GM12878 (cell line): ENCODE measurements at regions of chr14 and their contacts with region 1.

Region 1: DNA sequence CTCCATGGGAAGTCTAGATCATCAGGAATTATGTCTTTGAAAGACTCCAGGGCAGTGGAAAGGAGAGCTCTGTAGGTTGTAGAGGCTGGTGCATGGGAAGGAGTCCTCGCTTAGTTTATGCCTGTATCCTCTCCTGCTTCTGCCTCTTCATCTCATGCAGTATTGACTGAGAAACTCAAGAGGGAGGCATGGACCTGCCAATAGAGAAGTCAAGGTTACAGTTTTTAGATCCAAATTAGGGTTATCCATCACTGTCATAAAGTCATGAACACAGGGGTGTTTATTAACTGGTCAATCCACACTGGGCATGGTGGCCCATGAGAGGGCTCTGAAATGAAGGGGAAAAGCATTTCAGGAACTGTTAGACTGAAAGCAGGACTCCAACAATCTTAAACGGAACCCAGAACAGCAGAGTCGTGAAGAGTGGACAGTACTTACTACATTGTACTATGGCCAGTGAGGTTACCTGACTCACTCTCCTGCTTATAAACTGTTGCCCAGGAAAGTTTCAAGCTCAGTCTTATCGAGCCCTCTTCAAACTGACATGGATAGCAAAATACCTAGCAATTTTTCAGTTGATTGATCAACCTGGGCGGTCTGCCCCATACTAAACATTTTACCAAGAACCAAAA is 30.1 kb upstream of the DHRS7 start:
- DNase-seq: no peak
- ATAC-seq: peak; percentile 88
- H3K4me3 ChIP-seq: no peak overlapping the region
- H3K27ac ChIP-seq: no peak overlapping the region
- H3K4me1 ChIP-seq: peaks cover 10% of the 10 kb centered on the region
- H3K27me3 ChIP-seq: no peaks in the 10 kb centered on the region
- CTCF ChIP-seq: peak; percentile 50 to 70 (median 59); a peak in 5 of 6 replicates
- EP300 ChIP-seq: no peak
- POLR2A ChIP-seq: no peak
- RAD21 ChIP-seq: peak; percentile 91

Region 2: DNA sequence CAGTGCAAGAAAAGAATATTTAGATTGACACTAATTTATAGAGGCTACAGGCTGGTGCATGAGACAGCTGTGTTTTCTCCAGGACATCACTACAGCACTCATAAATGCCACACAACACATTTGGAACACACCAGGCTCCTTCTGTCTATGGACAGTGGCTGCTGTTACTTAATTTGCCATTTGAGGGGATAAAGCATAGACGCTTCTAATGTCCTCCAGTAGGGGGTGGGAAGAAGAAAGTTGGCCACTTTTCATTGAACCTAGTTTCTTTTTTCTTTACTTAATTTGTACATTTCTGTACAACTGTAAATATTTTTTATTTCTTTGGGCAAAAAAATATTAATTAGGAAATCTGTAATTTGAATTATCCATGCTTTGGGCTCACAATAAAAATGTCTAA is 312.3 kb before region 1 on chr14:
- CTCF ChIA-PET with region 1: no interaction called
- POLR2A ChIA-PET with region 1: no interaction called
- RAD21 ChIA-PET with region 1: no interaction called
- SMC1A ChIA-PET with region 1: no interaction called
- in situ Hi-C with region 1: no loop called
- intact Hi-C with region 1: no loop called
- DNase-seq: no peak
- ATAC-seq: peak; percentile 65
- H3K4me3 ChIP-seq: no peak overlapping the region
- H3K27ac ChIP-seq: no peak overlapping the region
- H3K4me1 ChIP-seq: no peaks in the 10 kb centered on the region
- H3K27me3 ChIP-seq: no peaks in the 10 kb centered on the region; a peak in 1 of 4 replicates
- CTCF ChIP-seq: peak; percentile 9 to 39 (median 30); a peak in 2 of 6 replicates
- EP300 ChIP-seq: no peak
- POLR2A ChIP-seq: no peak
- RAD21 ChIP-seq: no peak

Region 3: DNA sequence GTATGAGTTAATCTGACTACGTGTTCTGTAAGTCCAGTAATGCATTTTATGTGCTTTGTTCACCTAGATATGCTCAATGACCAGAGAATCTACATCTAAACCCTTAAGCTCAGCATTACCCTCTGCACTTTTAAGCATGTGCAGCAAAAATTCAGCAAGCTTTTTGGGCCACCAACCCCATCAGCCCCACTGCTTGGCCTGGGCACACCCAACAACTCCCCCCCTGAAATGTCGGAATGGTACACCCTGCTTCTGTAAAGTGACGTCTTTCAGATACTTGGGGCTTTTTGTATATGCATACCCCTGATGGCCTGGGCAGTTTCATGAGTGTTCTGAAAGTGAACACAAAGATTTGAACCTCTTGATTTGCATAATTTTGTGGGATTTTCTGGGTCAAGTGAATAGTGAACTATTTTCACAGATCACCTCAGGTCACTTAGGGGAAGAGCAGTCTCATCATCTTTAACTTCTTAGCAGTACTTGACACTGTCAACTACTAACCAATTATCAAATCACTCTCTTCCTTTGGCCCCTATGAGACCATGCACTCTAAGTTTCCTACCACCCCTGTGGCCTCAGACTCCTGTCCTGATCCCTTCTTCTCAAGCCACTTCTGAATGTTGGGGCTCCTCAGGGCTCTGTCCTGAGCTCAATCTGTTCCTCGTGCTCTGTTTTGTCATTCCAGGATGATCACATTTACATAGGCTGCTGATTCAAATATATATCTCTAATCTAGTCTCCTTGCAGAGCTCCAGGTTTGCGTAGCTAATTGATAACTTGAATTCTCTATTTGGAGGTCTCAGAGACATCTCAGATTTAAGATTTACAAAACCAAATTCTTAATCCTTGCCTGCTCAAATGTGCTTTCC is 17.4 kb after region 1 on chr14:
- CTCF ChIA-PET with region 1: interaction called, 9 read pairs
- POLR2A ChIA-PET with region 1: interaction called, 241 read pairs
- RAD21 ChIA-PET with region 1: interaction called, 153 read pairs
- SMC1A ChIA-PET with region 1: interaction called, 202 read pairs
- in situ Hi-C with region 1: no loop called
- intact Hi-C with region 1: no loop called
- DNase-seq: peak; percentile 98
- ATAC-seq: peak; percentile 89
- H3K4me3 ChIP-seq: no peak overlapping the region
- H3K27ac ChIP-seq: peak overlapping the region; percentile 93
- H3K4me1 ChIP-seq: peaks cover 39% of the 10 kb centered on the region
- H3K27me3 ChIP-seq: no peaks in the 10 kb centered on the region
- CTCF ChIP-seq: no peak
- EP300 ChIP-seq: peak; percentile 73 to 86
- POLR2A ChIP-seq: no peak; the same call in 1 of the 2 replicates
- RAD21 ChIP-seq: no peak

Region 4: DNA sequence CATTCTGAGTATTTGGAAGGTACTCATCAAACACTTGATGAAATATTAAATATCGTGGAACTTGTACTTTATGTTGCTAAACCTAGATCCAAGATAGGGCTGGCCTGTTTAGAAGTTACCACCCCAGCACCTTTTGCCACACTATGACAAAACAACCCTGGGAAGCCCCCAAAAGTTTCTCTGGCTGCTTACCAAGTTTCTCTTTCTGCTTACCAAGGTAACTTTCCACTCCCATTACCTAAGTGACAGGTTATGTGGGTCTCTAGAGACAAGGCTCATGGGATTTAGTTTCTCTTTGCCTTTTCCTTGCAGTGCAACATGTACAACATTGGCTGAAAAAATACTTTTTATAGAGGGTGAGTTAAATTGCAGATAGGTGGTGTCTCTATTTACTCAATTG is 24.8 kb after region 1 on chr14:
- CTCF ChIA-PET with region 1: interaction called, 9 read pairs
- POLR2A ChIA-PET with region 1: interaction called, 241 read pairs
- RAD21 ChIA-PET with region 1: interaction called, 5 read pairs
- SMC1A ChIA-PET with region 1: interaction called, 202 read pairs
- in situ Hi-C with region 1: no loop called
- intact Hi-C with region 1: no loop called
- DNase-seq: peak; percentile 82
- ATAC-seq: peak; percentile 72
- H3K4me3 ChIP-seq: no peak overlapping the region
- H3K27ac ChIP-seq: peak overlapping the region; percentile 49
- H3K4me1 ChIP-seq: peaks cover 28% of the 10 kb centered on the region
- H3K27me3 ChIP-seq: no peaks in the 10 kb centered on the region
- CTCF ChIP-seq: no peak
- EP300 ChIP-seq: no peak
- POLR2A ChIP-seq: no peak
- RAD21 ChIP-seq: no peak

Region 5: DNA sequence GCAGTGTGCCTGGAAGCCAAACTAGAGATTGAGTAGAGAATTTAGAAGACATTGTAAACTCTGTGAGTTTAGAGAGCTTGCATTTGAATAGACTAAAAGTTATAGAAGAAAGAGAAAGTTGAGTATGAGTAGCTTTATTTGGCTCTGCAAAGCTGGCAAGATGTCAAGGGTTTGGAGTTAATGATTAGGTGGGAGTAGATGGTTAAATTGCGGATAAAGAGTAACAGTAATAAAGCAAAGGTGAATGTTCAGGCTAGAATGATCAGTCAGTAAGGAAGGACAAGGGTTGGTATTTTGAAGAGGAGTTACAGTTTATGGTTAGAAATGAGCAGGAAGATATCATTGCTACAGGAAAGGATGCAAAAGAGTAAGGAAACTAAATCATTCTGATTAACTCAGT is 58.9 kb after region 1 on chr14:
- CTCF ChIA-PET with region 1: interaction called, 6 read pairs
- POLR2A ChIA-PET with region 1: interaction called, 8 read pairs
- RAD21 ChIA-PET with region 1: interaction called, 13 read pairs
- SMC1A ChIA-PET with region 1: interaction called, 52 read pairs
- in situ Hi-C with region 1: no loop called
- intact Hi-C with region 1: no loop called
- DNase-seq: no peak
- ATAC-seq: no peak
- H3K4me3 ChIP-seq: peak overlapping the region; percentile 24; the same call in 1 of the 2 replicates
- H3K27ac ChIP-seq: no peak overlapping the region
- H3K4me1 ChIP-seq: no peaks in the 10 kb centered on the region
- H3K27me3 ChIP-seq: no peaks in the 10 kb centered on the region
- CTCF ChIP-seq: no peak
- EP300 ChIP-seq: no peak
- POLR2A ChIP-seq: no peak
- RAD21 ChIP-seq: no peak

Region 6: DNA sequence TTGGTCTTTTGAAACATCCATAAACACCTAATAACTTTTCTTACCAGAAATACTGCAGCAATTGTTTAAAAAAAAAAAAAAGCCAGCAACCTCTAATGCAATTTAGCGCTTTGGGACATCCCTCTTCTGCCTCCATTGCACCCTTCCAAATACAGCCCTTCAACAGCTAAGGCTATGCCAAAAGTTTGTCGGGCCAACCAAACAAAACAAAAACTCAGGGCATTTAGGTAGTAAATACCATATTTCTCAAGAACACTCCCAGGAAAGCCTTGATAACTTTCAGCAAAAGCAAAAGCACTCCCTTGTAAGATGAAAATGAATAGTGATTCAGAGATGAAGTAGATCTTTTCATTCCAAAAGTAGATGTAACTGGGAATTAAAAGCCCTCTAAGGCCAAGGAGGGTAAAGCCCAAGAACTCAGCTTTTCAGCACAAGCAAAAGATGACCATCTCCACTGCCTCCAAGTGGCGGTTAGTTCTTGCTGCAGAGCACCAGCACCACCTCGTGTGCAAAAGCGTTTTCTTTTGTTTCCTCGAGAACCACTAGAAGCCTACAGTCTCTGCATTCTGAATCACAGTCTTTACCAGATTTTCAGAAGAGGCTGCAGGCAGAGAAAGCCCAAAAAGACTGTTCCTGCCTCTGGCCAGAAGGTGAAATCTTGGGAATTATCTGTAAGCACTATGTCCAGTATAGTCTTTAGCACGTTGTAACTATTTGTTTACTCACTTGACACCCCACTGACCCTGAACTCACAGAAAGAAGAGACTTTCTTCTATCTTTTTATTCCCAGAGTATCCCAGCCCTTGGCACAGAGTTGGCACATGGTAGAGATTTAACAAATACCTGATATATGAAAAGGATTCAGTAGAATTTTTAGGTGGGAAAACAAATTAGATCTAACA is 366.8 kb after region 1 on chr14:
- CTCF ChIA-PET with region 1: interaction called, 119 read pairs
- POLR2A ChIA-PET with region 1: no interaction called
- RAD21 ChIA-PET with region 1: interaction called, 9 read pairs
- SMC1A ChIA-PET with region 1: interaction called, 66 read pairs
- in situ Hi-C with region 1: no loop called
- intact Hi-C with region 1: no loop called
- DNase-seq: peak; percentile 19
- ATAC-seq: peak; percentile 94
- H3K4me3 ChIP-seq: no peak overlapping the region
- H3K27ac ChIP-seq: no peak overlapping the region
- H3K4me1 ChIP-seq: 0 out of 2 replicates have a peak, but pooled peaks cover 5% of the 10 kb centered on the region
- H3K27me3 ChIP-seq: no peaks in the 10 kb centered on the region
- CTCF ChIP-seq: peak; percentile 72 to 90 (median 79)
- EP300 ChIP-seq: no peak
- POLR2A ChIP-seq: no peak
- RAD21 ChIP-seq: peak; percentile 89

Region 7: GRCh38 chr14:61080591-61081010 is 885.3 kb after region 1 on chr14:
- CTCF ChIA-PET with region 1: no interaction called
- POLR2A ChIA-PET with region 1: no interaction called
- RAD21 ChIA-PET with region 1: no interaction called
- SMC1A ChIA-PET with region 1: no interaction called
- in situ Hi-C with region 1: no loop called
- intact Hi-C with region 1: no loop called
- DNase-seq: peak; percentile 53
- ATAC-seq: peak; percentile 94
- H3K4me3 ChIP-seq: 0 out of 2 replicates have a peak overlapping the region, but pooled peaks have one; percentile 5
- H3K27ac ChIP-seq: no peak overlapping the region; the same call in 1 of the 2 replicates
- H3K4me1 ChIP-seq: peaks cover 14% of the 10 kb centered on the region
- H3K27me3 ChIP-seq: no peaks in the 10 kb centered on the region
- CTCF ChIP-seq: 0 out of 6 replicates have a peak, but pooled peaks of 1 of the 3 experiments have one; percentile 15
- EP300 ChIP-seq: peak; percentile 41 to 45; a peak in 2 of 4 replicates
- POLR2A ChIP-seq: no peak
- RAD21 ChIP-seq: 0 out of 2 replicates have a peak, but pooled peaks have one; percentile 13